Activated CD4-positive, alpha-beta memory T cell treated with anti-CD3 and anti-CD28 coated beads for 36 hours (primary cell): ENCODE measurements at regions of chr2 and their contacts with region 1.

Region 1: DNA sequence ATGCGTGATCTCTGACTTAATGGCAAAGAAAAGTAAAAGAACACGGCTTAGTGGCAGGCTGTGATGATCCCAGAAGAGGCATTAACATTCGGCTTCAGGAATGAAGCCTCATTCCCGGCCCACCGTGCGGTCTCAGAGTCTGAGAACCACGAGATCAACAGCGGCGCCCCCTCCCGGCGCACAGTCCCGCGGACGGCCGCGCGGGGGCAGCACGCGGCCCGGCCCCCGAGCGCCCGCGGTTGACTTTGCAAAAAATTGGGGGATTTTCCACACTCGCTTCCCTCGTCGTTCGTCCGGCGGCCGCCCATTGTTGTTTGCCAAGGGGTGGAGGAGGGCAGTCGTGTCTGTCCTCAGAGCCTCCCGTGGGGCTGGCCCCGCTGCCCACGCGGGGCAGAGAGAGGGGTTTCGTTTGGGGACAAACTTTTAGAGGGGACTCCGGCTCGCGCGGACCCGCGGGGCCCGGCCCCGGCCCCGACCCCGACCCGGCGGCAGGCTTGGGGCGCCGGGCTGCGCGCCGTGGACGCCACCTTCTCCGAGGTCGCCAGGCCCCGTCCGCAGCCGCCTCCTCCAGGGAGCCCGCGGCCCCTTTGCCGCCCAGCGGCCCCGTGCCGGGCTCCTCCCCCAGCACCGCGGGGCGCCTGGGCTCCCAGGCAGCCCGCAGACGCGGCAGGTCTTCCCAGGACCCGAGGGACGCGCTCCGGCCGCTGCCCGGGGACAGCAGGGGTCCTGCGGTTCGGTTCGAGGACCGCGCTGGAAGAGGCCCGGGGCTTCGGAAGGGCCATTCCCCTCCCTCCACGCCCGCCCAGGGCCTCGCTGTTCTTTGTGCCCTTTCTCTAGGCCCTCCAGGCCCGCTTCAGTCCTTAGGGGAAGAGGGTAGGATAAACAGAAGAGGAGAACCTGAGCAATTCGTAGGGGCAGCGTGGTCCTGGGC is 3.4 kb upstream of the HS6ST1 start:
- DNase-seq: peak; percentile 85
- H3K4me3 Mint-ChIP-seq: peak overlapping the region; percentile 60
- H3K27ac Mint-ChIP-seq: no peak overlapping the region
- H3K4me1 Mint-ChIP-seq: peaks cover 6% of the 10 kb centered on the region
- H3K27me3 Mint-ChIP-seq: no peaks in the 10 kb centered on the region

Region 2: DNA sequence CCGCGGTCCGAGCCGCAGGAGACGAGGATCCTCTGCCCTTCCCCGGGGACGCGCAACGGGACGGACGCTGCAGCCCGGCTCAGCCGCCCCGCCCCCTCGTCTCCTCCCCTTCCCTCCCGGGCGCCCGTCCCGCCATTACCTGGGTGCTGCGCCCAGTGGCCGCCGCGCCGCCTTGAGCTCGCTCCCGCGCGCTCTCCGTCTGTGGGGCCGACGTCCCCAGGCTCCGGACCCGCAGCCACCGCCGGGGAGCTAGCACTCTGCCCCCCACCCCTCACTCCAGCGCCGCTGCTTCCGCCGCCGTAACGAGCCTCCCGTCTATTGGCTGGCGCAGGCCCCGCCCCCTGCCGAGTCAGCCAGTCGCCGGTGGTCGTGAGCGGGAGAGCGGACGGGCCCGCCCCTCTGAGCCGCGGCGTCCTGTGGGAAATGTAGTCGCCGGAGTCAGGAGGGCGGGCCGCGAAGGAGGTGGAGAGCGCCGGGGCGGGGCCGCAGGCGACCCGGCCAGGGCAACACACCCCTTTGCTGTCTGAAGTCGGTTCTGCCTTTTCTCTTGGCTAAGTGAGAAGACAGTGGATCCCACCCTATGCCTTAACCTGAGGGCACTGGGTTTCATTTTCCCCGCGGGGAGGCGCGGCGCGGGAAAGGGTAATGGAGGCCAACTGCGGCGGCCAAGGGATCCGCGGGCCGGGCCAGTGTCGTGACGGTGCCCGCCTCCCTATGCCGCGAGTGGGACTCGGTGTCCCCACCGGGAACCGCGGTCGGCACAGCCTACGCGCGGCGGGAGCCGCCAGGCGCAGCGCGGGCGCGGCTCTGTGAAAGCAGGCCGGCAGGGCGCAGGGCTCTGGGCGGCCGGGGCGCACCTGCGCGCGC is 294.0 kb before region 1 on chr2 and contains the start of gene SAP130:
- CTCF ChIA-PET with region 1: no interaction called
- POLR2A ChIA-PET with region 1: no interaction called
- intact Hi-C with region 1: loop called (anchors 5 kb)
- DNase-seq: peak; percentile 99
- H3K4me3 Mint-ChIP-seq: peak within 1 kb of the TSS; percentile 97
- H3K27ac Mint-ChIP-seq: peak within 1 kb of the TSS; percentile 80
- H3K4me1 Mint-ChIP-seq: peaks cover 16% of the 10 kb centered on the region
- H3K27me3 Mint-ChIP-seq: no peaks in the 10 kb centered on the region
- total RNA-seq, gene SAP130: 21.8 to 25.7 TPM

Region 3: GRCh38 chr2:128090945-128091725 is 230.9 kb before region 1 on chr2 and contains the start of gene UGGT1:
- CTCF ChIA-PET with region 1: no interaction called
- POLR2A ChIA-PET with region 1: no interaction called
- intact Hi-C with region 1: loop called (anchors 10 kb)
- DNase-seq: peak; percentile 96
- H3K4me3 Mint-ChIP-seq: peak within 1 kb of the TSS; percentile 91
- H3K27ac Mint-ChIP-seq: peak within 1 kb of the TSS; percentile 92
- H3K4me1 Mint-ChIP-seq: peaks cover 41% of the 10 kb centered on the region
- H3K27me3 Mint-ChIP-seq: no peaks in the 10 kb centered on the region
- total RNA-seq, gene UGGT1: 50.8 to 53.2 TPM

Region 4: GRCh38 chr2:128178650-128179460 is 143.2 kb before region 1 on chr2:
- CTCF ChIA-PET with region 1: no interaction called
- POLR2A ChIA-PET with region 1: no interaction called
- intact Hi-C with region 1: loop called (anchors 5 kb)
- DNase-seq: peak; percentile 63
- H3K4me3 Mint-ChIP-seq: no peak overlapping the region
- H3K27ac Mint-ChIP-seq: no peak overlapping the region
- H3K4me1 Mint-ChIP-seq: peaks cover 4% of the 10 kb centered on the region
- H3K27me3 Mint-ChIP-seq: no peaks in the 10 kb centered on the region

Region 5: DNA sequence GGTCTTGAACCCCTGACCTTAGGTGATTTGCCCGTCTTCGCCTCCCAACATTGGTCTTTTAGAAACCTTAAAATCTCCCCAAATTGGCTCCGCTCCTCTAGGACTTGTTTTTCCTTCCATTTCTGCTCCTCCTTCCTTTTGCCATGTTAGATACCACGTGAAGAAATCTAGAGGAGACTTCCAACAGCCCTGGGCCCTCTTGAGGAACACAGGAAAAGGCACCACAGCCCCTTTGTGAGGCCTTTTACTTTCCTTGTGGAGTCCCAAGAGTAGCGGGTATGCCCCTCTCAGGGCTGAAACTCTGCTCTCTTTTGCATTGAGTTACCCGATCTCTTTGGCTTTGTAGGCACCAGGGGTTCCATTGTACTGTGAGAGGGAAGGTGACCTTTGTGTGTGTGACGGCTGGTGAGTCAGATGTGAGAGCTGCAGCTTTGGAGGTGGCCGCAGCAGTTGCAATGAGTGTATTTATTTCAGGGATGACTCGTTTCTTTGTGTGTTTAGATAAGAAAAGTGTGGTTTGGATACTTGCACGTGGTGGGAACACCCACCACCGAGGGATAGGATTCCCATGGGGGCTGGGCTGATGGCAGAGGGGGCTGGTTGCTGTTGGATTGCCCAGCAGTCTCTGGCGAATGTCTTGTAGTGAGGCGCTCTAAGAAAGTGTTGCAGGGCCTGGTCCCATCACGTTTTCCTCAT is 215.0 kb after region 1 on chr2:
- CTCF ChIA-PET with region 1: no interaction called
- POLR2A ChIA-PET with region 1: no interaction called
- intact Hi-C with region 1: loop called (anchors 10 kb)
- DNase-seq: peak; percentile 39
- H3K4me3 Mint-ChIP-seq: no peak overlapping the region
- H3K27ac Mint-ChIP-seq: no peak overlapping the region
- H3K4me1 Mint-ChIP-seq: no peaks in the 10 kb centered on the region
- H3K27me3 Mint-ChIP-seq: peaks cover 2% of the 10 kb centered on the region

Region 6: GRCh38 chr2:128736689-128737545 is 414.9 kb after region 1 on chr2:
- CTCF ChIA-PET with region 1: no interaction called
- POLR2A ChIA-PET with region 1: no interaction called
- intact Hi-C with region 1: loop called (anchors 10 kb)
- DNase-seq: peak; percentile 66
- H3K4me3 Mint-ChIP-seq: peak overlapping the region; percentile 17
- H3K27ac Mint-ChIP-seq: no peak overlapping the region
- H3K4me1 Mint-ChIP-seq: no peaks in the 10 kb centered on the region
- H3K27me3 Mint-ChIP-seq: peaks cover 16% of the 10 kb centered on the region

Region 7: DNA sequence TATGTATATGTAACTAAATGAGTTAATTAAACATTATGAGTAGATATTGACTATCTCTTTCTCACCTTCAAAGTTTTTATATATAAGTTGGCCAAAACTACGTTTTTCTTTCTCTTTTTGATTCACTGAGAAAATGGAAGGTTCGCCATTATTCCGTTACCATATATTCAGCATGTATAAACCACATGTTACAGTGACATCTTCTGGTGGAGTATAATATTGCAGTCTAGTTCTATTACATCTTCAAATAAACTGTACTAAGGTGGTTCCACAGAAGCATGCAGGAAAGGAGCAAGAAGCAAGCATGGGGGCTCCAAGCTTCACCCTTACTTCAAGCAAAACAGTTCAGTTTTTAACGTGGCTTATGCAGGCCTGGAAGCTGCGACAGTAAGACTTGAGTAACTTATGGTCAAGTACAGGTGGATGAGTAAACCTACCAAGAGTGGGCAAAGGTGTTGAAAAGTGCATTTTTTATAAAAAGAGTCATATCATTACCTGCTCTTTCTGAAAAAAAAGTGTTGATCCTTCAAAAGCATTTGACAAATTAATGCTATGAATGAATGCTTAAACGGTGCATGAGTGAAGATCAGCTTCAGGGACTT is 1527.6 kb after region 1 on chr2:
- CTCF ChIA-PET with region 1: no interaction called
- POLR2A ChIA-PET with region 1: no interaction called
- intact Hi-C with region 1: loop called (anchors 10 kb)
- DNase-seq: no peak
- H3K4me3 Mint-ChIP-seq: no peak overlapping the region
- H3K27ac Mint-ChIP-seq: no peak overlapping the region
- H3K4me1 Mint-ChIP-seq: no peaks in the 10 kb centered on the region
- H3K27me3 Mint-ChIP-seq: peaks cover 16% of the 10 kb centered on the region